AG04450 (cell line): ENCODE measurements at regions of chr9 and their contacts with region 1.

Region 1: DNA sequence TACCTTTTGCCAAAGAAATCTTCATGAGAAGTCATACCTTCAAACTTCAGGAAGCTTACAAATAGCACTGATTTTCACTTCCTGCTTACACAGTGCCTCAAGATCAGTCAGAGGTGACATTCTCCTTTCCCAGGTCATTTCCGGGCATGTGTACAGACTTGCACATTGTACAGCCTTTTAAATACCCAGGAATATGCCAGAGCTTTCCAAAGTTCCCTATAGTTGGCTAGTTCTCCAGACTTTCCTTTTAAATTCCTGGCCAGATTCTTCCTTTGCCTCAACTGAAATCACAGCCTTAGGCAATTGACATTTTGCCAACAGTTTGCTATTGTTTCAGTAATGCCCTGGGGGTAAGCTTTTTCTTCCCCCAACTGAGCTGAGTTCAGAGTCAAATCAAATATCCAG is 47.2 kb downstream of the RFX3 start:
- DNase-seq: no peak
- H3K4me3 ChIP-seq: no peak overlapping the region
- H3K27ac ChIP-seq: no peak overlapping the region
- H3K27me3 ChIP-seq: no peaks in the 10 kb centered on the region
- CTCF ChIP-seq: no peak

Region 2: GRCh38 chr9:3467593-3468219 is 10.8 kb before region 1 on chr9:
- CTCF ChIA-PET with region 1: interaction called, 15 read pairs
- POLR2A ChIA-PET with region 1: no interaction called
- DNase-seq: peak; percentile 34
- H3K4me3 ChIP-seq: no peak overlapping the region
- H3K27ac ChIP-seq: no peak overlapping the region
- H3K27me3 ChIP-seq: no peaks in the 10 kb centered on the region
- CTCF ChIP-seq: peak; percentile 99